ENCODE measurements at regions of chr18 and their contacts with region 1.

Region 1: DNA sequence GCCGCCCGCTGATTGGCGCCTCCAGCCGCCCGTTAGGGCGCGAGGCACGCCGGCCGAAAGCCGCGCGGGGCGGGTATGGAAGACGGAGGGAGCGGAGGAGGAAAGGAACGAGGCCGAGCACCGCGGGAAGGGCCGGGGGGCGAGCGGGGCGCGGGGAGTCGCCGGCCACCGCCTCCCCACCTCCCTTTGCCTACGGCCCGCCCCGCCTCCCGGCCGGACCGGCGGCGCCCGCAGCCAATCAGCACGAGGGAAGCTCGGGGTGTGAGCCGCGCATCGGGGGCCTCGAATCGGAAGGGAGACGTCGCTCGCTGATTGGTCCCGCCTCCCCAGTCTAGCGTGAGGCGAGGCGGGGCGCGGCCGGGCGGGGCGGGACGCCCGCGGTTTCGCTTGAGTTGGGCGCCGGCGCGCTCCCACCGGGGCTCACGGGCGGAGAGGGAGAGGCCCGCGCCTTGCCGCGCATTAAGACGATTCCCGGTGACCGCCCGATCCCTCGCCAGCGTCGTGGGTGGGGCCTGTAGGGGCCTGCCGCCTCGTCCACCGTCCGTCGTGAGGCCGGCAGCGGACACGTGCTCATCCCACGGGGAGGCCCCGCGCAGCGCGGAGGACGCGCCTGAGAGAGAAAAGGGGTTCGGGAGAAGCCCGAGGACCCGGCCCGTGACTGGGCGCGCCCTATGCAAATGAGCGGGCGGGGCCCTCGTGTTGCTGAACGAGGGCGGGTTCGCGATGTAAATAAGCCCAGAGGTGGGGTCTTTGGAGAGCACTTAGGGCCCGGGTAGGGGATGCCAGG is 665 bp upstream of the SMAD2 start:
- DNase-seq: peak; percentile 94 to 97 (median 96)
- H3K4me3 ChIP-seq: peak overlapping the region; percentile 26 to 70
- H3K4me3 Mint-ChIP-seq: peak overlapping the region; percentile 83 to 94 (median 87)
- H3K27ac ChIP-seq: peak overlapping the region; percentile 82
- H3K27ac Mint-ChIP-seq: peak overlapping the region; percentile 87 to 97 (median 93)
- H3K4me1 ChIP-seq: peaks cover 49% of the 10 kb centered on the region
- H3K4me1 Mint-ChIP-seq: peaks cover 36 to 46% (median 41%) of the 10 kb centered on the region in 4 donors
- H3K27me3 ChIP-seq: no peaks in the 10 kb centered on the region
- H3K27me3 Mint-ChIP-seq: no peaks in the 10 kb centered on the region

Region 2: DNA sequence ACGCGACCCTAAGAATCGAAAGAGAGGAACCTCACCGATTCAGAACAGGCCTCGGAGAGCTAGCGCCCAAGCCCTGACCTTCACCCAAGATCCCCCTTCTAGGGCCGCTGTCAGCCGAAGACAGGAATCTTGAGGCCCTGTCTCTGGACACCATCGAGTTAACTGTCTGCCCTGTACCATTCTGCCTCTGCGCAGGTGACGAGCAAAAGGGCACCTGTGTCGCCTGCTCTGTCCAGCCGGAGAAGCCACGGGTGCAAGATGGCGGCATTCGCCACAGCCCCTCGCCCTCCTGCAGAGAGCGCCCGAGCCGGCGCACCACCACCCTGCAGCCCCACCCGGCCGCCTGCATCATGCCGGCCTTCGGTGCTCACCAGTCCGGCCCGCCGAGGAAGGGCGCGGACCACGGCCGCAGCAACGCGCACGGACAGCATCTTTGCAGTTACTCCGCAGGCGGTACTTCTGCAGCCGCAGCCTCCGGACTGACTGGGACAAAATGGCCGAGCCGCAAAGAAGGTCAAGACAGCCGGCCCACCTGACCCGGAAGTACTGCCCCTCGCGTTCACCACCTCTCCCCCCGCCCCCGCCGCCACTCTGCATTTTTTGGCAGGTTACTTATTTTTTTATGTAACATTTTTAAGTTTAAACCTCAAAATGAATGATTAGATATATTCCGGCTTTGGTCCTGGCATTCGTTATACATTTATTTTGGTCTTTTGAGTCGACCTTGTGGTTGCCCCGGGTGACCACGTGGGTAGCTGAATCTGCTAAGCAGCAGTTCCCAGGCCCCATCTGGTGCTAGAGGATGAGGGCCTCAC is 1833.1 kb before region 1 on chr18 and contains the start of gene ATP5F1A:
- CTCF ChIA-PET with region 1: no interaction called
- POLR2A ChIA-PET with region 1: no interaction called
- intact Hi-C with region 1: loop called (anchors 5 kb)
- DNase-seq: peak; percentile 82 to 90 (median 86)
- H3K4me3 ChIP-seq: peak within 1 kb of the TSS; percentile 39 to 95
- H3K4me3 Mint-ChIP-seq: peak within 1 kb of the TSS; percentile 92 to 99 (median 98)
- H3K27ac ChIP-seq: peak within 1 kb of the TSS; percentile 93
- H3K27ac Mint-ChIP-seq: peak within 1 kb of the TSS; percentile 94 to 99 (median 98)
- H3K4me1 ChIP-seq: peaks cover 47% of the 10 kb centered on the region
- H3K4me1 Mint-ChIP-seq: peaks cover 14 to 40% (median 25%) of the 10 kb centered on the region in 4 donors
- H3K27me3 ChIP-seq: no peaks in the 10 kb centered on the region
- H3K27me3 Mint-ChIP-seq: no peaks in the 10 kb centered on the region
- total RNA-seq, gene ATP5F1A: 212 to 225 TPM

Region 3: GRCh38 chr18:47150029-47150823 is 780.9 kb before region 1 on chr18 and contains the start of gene HDHD2:
- CTCF ChIA-PET with region 1: no interaction called
- POLR2A ChIA-PET with region 1: no interaction called
- intact Hi-C with region 1: loop called (anchors 10 kb)
- DNase-seq: peak; percentile 62 to 72 (median 69)
- H3K4me3 ChIP-seq: peak within 1 kb of the TSS; percentile 31 to 72
- H3K4me3 Mint-ChIP-seq: peak within 1 kb of the TSS; percentile 92 to 98 (median 96)
- H3K27ac ChIP-seq: peak within 1 kb of the TSS; percentile 70
- H3K27ac Mint-ChIP-seq: peak within 1 kb of the TSS; percentile 89 to 98 (median 97)
- H3K4me1 ChIP-seq: peaks cover 39% of the 10 kb centered on the region
- H3K4me1 Mint-ChIP-seq: peaks cover 35 to 61% (median 49%) of the 10 kb centered on the region in 4 donors
- H3K27me3 ChIP-seq: no peaks in the 10 kb centered on the region
- H3K27me3 Mint-ChIP-seq: no peaks in the 10 kb centered on the region
- total RNA-seq, gene HDHD2: 34.2 to 36.5 TPM

Region 4: DNA sequence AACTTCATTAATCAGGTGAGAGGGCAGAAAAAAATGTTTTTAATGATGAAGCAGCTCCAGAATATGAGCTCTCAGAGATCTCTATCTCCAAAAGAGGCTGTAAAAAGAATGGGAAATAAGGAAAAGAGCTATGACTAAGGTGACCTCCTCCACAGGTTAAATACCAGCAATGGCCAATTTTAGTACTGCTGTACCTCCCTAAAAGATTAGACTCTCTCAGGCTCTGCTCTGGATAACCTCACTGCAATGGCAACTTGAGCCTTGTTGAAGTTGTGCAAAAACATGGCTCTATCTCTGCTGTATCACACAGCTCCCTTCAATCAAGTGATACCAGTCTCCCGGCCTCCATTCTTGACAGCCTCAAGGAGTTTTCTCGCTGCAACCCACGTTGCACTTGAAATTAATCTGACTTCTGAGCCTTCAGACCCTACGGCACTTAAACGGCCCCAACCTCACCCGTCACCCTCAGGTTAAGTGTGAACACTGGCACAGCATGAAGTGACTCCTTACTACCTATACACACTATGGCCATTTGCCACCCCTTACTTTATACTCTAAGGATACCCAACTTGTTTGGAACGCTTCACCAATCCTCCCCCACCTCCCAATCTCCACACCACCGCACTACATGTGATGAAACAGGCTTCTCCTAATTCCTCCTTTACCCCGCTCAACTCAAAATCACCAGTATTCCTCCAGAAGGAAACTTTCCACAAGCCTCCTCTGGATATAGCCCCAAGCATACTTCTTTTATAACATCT is 37.0 kb before region 1 on chr18:
- CTCF ChIA-PET with region 1: interaction called, 3 read pairs
- POLR2A ChIA-PET with region 1: interaction called, 20 read pairs
- intact Hi-C with region 1: no loop called
- DNase-seq: no peak
- H3K4me3 ChIP-seq: no peak overlapping the region
- H3K4me3 Mint-ChIP-seq: peak overlapping the region in 1 of 8 donors; percentile 19
- H3K27ac ChIP-seq: no peak overlapping the region
- H3K27ac Mint-ChIP-seq: peak overlapping the region in 3 of 7 donors; percentile 2 to 11 (median 9)
- H3K4me1 ChIP-seq: peaks cover 13% of the 10 kb centered on the region
- H3K4me1 Mint-ChIP-seq: peaks cover 27 to 50% (median 36%) of the 10 kb centered on the region in 4 donors
- H3K27me3 ChIP-seq: no peaks in the 10 kb centered on the region
- H3K27me3 Mint-ChIP-seq: no peaks in the 10 kb centered on the region

Region 5: DNA sequence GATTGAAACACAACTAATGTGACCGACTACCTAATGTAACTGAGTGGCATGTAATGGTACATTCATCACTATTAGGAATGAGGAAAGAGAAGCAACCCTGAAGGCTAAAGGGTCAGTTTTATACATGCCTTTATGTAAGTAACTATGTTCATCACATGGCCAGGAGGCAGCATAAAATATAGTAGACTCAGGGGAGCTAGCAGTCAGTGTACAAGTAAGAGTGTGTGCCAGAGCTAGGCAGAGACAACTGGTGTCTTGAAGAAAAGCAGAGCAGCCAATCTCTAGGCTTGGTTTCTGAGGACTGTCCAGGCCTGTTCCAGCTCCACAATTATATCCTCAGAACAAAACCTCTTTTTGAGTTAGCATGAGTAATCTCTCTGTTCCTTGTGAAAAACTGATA is 18.8 kb before region 1 on chr18:
- CTCF ChIA-PET with region 1: interaction called, 3 read pairs
- POLR2A ChIA-PET with region 1: interaction called, 4 read pairs
- intact Hi-C with region 1: loop called (anchors 2 kb)
- DNase-seq: no peak
- H3K4me3 ChIP-seq: no peak overlapping the region
- H3K4me3 Mint-ChIP-seq: peak overlapping the region in 7 of 8 donors; percentile 18 to 80 (median 47)
- H3K27ac ChIP-seq: peak overlapping the region; percentile 24
- H3K27ac Mint-ChIP-seq: peak overlapping the region; percentile 25 to 87 (median 67)
- H3K4me1 ChIP-seq: peaks cover 78% of the 10 kb centered on the region
- H3K4me1 Mint-ChIP-seq: peaks cover 61 to 92% (median 76%) of the 10 kb centered on the region in 4 donors
- H3K27me3 ChIP-seq: no peaks in the 10 kb centered on the region
- H3K27me3 Mint-ChIP-seq: no peaks in the 10 kb centered on the region

Region 6: GRCh38 chr18:47953471-47953931 is 22.4 kb after region 1 on chr18:
- CTCF ChIA-PET with region 1: no interaction called
- POLR2A ChIA-PET with region 1: interaction called, 13 read pairs
- intact Hi-C with region 1: loop called (anchors 2 kb)
- DNase-seq: peak in 3 of 5 donors; percentile 9 to 24 (median 16)
- H3K4me3 ChIP-seq: no peak overlapping the region
- H3K4me3 Mint-ChIP-seq: peak overlapping the region in 7 of 8 donors; percentile 31 to 87 (median 66)
- H3K27ac ChIP-seq: no peak overlapping the region
- H3K27ac Mint-ChIP-seq: peak overlapping the region; percentile 33 to 89 (median 84)
- H3K4me1 ChIP-seq: peaks cover 10% of the 10 kb centered on the region
- H3K4me1 Mint-ChIP-seq: peaks cover 6 to 19% (median 9%) of the 10 kb centered on the region in 4 donors
- H3K27me3 ChIP-seq: no peaks in the 10 kb centered on the region
- H3K27me3 Mint-ChIP-seq: peaks cover 1 to 2% of the 10 kb centered on the region in 2 donors

Region 7: DNA sequence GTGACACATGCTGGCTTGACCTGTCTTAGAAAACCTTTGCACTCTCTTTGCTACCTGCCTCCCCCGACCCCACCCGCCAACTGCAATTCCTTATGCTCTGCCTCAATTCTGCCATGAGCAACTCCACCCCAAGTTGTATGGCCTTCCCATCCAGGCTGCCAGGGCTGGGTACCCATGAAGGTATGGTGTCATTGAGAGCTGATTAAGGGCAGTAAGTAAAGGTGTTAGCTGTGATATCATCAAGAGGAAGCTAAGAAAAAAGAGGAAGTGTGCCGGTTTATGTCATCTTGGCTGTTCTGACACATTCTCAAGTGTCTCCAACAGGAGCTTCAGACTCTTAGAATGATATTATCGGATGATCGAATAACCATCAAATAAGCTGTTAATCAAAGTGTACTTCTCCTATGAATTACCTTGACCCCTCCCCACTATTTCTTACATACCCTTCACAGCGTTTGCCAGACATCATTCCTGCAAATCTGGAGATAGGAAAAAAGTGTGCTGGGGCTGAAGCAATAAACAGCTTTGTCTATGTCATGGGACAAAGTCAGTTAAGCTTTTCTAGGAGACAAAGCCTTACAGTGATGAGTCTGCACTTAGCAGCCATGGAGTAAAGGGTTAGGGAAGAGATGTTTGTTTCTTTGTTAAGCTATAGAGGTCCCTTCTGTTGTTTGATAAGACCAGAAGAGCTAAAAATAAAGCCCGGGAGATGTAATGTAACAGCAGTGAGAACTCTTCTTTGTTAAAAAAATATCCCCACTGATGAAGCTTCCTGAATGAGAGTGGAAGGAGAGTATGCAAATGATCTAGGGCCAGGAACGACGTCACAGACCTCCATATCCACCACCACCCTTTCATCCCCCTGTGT is 39.8 kb after region 1 on chr18:
- CTCF ChIA-PET with region 1: no interaction called
- POLR2A ChIA-PET with region 1: no interaction called
- intact Hi-C with region 1: no loop called
- DNase-seq: no peak
- H3K4me3 ChIP-seq: no peak overlapping the region
- H3K4me3 Mint-ChIP-seq: no peak overlapping the region
- H3K27ac ChIP-seq: no peak overlapping the region
- H3K27ac Mint-ChIP-seq: peak overlapping the region in 1 of 7 donors; percentile 9
- H3K4me1 ChIP-seq: no peaks in the 10 kb centered on the region
- H3K4me1 Mint-ChIP-seq: no peaks in the 10 kb centered on the region
- H3K27me3 ChIP-seq: no peaks in the 10 kb centered on the region
- H3K27me3 Mint-ChIP-seq: peaks cover 16 to 18% of the 10 kb centered on the region in 2 donors

Region 8: DNA sequence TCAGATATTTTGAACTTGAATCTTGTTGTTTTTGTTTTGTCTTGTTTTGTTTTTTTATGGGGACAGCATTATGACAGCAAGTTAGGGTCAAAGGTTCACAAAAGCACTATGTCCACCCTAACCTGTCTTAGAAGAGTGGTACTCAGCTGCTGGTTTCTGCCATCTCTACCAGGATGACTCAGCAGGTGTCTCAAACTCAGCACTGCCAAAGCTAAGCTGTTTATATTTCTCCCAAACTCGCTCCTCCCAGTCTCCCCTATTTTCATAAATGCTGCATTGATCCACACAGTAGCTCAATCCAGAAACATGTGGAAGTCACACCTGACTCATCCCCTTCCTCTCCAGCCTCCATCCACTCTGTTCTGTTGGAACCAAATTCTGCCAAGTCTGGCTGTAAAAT is 343.2 kb after region 1 on chr18:
- CTCF ChIA-PET with region 1: no interaction called
- POLR2A ChIA-PET with region 1: no interaction called
- intact Hi-C with region 1: no loop called
- DNase-seq: no peak
- H3K4me3 ChIP-seq: no peak overlapping the region
- H3K4me3 Mint-ChIP-seq: no peak overlapping the region
- H3K27ac ChIP-seq: no peak overlapping the region
- H3K27ac Mint-ChIP-seq: no peak overlapping the region
- H3K4me1 ChIP-seq: no peaks in the 10 kb centered on the region
- H3K4me1 Mint-ChIP-seq: peaks cover 0 to 1% (median 0%) of the 10 kb centered on the region in 4 donors
- H3K27me3 ChIP-seq: no peaks in the 10 kb centered on the region
- H3K27me3 Mint-ChIP-seq: peaks cover 3 to 5% of the 10 kb centered on the region in 2 donors

Region 9: GRCh38 chr18:48445540-48445939 is 514.4 kb after region 1 on chr18:
- CTCF ChIA-PET with region 1: no interaction called
- POLR2A ChIA-PET with region 1: no interaction called
- intact Hi-C with region 1: loop called (anchors 2 kb)
- DNase-seq: peak; percentile 61 to 68 (median 65)
- H3K4me3 ChIP-seq: no peak overlapping the region
- H3K4me3 Mint-ChIP-seq: no peak overlapping the region
- H3K27ac ChIP-seq: no peak overlapping the region
- H3K27ac Mint-ChIP-seq: no peak overlapping the region
- H3K4me1 ChIP-seq: no peaks in the 10 kb centered on the region
- H3K4me1 Mint-ChIP-seq: peaks cover 8 to 13% (median 10%) of the 10 kb centered on the region in 4 donors
- H3K27me3 ChIP-seq: no peaks in the 10 kb centered on the region
- H3K27me3 Mint-ChIP-seq: peaks cover 13% of the 10 kb centered on the region in 2 donors